AG04449 (cell line): ENCODE measurements at regions of chr9 and their contacts with region 1.

Region 1: GRCh38 chr9:75001719-75002422 is 26.2 kb downstream of the CARNMT1 start:
- DNase-seq: peak; percentile 60
- H3K4me3 ChIP-seq: no peak overlapping the region
- CTCF ChIP-seq: peak; percentile 54

Region 2: GRCh38 chr9:74783408-74783807 is 218.5 kb before region 1 on chr9:
- CTCF ChIA-PET with region 1: interaction called, 387 read pairs
- POLR2A ChIA-PET with region 1: no interaction called
- DNase-seq: peak; percentile 21
- H3K4me3 ChIP-seq: no peak overlapping the region
- CTCF ChIP-seq: no peak

Region 3: DNA sequence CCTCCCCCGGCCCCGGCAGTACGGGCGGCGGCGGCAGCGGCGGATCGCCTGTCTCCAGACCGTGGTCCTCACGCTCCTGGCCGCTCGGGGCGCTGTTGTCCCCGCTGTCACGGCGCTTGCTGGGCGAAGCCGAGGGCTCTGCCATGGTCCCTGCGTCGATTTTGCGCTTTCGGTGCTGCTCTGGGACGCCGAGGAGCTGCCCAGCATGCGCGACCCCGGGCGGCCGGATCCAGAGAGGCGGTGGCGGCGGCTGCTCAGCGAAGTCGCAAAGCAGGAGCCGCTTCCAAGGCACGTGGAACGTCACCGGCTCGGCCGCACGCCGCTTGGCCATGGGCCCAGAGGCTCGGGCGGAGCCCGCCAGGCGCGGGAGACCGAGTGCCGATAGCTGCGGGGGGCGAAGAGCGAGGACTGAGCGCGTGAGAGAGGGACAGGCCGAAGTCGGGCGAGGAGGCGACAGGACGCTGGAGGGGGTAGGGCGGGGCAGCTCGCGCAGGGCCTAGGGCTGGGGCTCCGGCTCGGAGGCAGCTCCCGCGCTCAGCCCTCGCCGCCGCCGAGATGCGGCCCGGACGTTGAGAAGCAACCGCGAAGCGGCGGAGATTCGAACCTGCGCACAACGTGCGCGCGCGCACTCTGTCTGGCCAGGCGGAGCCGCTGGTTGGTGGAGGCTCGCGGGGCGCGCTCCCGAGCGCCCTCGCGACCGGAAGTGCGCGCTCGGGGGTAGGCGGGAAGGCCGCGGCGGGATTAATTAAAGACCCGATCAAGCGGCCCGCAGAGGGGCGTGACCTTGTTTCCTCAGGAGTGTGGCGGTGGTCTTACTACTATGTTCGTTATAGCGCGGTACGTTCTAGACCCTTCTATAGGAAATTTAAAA is 49.4 kb before region 1 on chr9 and contains the start of gene C9orf40:
- CTCF ChIA-PET with region 1: interaction called, 19 read pairs
- POLR2A ChIA-PET with region 1: no interaction called
- DNase-seq: no peak
- H3K4me3 ChIP-seq: peak within 1 kb of the TSS; percentile 97
- CTCF ChIP-seq: peak; percentile 97

Region 4: GRCh38 chr9:74985041-74985440 is 16.8 kb before region 1 on chr9:
- CTCF ChIA-PET with region 1: interaction called, 50 read pairs
- POLR2A ChIA-PET with region 1: no interaction called
- DNase-seq: no peak
- H3K4me3 ChIP-seq: no peak overlapping the region
- CTCF ChIP-seq: no peak

Region 5: GRCh38 chr9:75019022-75019421 is 17.2 kb after region 1 on chr9:
- CTCF ChIA-PET with region 1: interaction called, 23 read pairs
- POLR2A ChIA-PET with region 1: no interaction called
- DNase-seq: no peak
- H3K4me3 ChIP-seq: no peak overlapping the region
- CTCF ChIP-seq: no peak

Region 6: DNA sequence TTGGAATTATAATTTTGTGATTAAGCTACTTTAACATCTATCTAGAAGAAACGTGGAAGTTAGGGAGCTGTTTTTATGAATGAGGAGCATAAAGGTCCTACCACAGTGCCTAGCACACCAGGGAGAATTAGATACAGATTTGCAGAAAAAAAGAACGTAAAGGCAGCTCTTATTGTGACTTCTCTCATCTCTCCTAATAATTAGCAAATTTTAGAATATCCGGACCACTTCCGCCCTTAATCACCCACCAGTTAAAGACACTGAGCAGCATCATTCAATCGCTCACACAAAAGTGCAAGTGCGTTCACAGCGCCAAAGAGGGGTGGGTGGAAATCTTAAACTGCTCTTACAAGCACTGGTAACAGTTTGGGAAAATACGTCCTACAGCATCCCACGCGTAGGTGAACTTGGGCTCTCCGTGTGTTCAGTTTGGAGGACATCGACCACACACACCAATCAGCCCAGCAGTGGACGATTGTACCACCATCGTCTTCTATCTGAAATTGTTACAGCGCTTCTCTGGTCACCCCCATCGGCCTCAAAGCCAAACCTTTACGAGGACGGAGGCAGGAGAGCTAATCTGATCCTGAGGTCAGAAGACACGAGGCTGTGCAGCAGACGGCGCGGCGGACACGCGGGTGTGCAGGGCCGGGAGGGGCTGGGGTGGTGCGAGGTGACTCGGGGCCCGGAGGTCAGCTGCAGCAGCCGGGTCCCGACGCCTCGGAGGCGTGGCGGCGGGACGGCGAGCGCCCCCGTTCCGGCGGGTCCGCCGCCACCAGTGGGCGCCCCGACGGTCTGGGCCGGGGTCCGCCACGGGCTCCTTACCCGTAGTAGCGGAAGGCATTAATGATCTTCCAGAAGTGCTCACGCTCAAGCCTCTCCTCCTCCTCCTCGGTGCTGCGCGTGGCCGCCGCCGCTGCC is 25.6 kb after region 1 on chr9:
- CTCF ChIA-PET with region 1: interaction called, 14 read pairs
- POLR2A ChIA-PET with region 1: no interaction called
- DNase-seq: no peak
- H3K4me3 ChIP-seq: peak overlapping the region; percentile 74
- CTCF ChIP-seq: peak; percentile 3

Region 7: GRCh38 chr9:75071530-75072124 is 69.8 kb after region 1 on chr9:
- CTCF ChIA-PET with region 1: interaction called, 22 read pairs
- POLR2A ChIA-PET with region 1: no interaction called
- DNase-seq: no peak
- H3K4me3 ChIP-seq: no peak overlapping the region
- CTCF ChIP-seq: no peak

Region 8: DNA sequence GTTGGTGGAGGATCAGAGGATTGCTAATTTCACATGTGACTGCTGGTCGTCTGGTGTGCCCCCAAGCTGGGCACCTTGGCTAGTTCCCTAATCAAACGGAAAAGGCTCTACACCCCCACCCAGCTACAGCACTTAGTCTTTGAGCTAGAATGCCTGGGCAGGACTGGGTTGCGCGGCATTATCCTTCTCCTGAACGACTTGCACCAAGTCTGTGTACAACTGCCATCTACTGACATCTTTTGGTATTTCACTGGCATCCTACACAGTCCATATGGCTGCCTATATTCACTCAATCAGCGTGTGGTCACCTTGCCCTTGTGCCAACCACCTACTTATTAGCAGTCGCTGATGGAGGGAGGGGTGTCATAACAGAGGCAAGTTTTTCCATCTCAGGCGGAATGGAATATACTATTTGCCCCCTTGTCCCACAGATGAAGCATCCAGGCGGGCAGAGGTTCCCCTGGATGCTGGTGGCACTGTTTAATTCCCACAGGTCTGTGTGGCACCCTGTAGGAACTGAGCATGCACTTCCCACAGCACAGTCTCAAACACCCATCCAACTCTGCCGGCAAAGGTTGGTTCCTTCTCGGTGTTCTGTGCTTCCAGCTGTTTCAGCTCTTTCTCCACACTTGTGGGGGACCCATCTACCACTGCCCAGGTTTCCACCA is 236.6 kb after region 1 on chr9:
- CTCF ChIA-PET with region 1: no interaction called
- POLR2A ChIA-PET with region 1: no interaction called
- DNase-seq: peak; percentile 28
- H3K4me3 ChIP-seq: no peak overlapping the region
- CTCF ChIP-seq: peak; percentile 48